ENCODE measurements at regions of chr4 and their contacts with region 1.

Region 1: GRCh38 chr4:153127760-153128494 is 76.3 kb upstream of the TRIM2 start:
- DNase-seq: peak; percentile 76 to 91 (median 87)
- ATAC-seq: peak; percentile 94
- H3K4me3 ChIP-seq: no peak overlapping the region
- H3K4me3 Mint-ChIP-seq: no peak overlapping the region
- H3K27ac ChIP-seq: no peak overlapping the region
- H3K27ac Mint-ChIP-seq: peak overlapping the region; percentile 46
- H3K4me1 ChIP-seq: peaks cover 3% of the 10 kb centered on the region
- H3K4me1 Mint-ChIP-seq: peaks cover 6% of the 10 kb centered on the region
- H3K27me3 ChIP-seq: no peaks in the 10 kb centered on the region
- H3K27me3 Mint-ChIP-seq: no peaks in the 10 kb centered on the region
- CTCF ChIP-seq: peak; percentile 92

Region 2: GRCh38 chr4:152436384-152436783 is 691.5 kb before region 1 on chr4:
- CTCF ChIA-PET with region 1: no interaction called
- POLR2A ChIA-PET with region 1: no interaction called
- intact Hi-C with region 1: no loop called
- DNase-seq: peak in 1 of 9 experiments; percentile 11
- ATAC-seq: no peak
- H3K4me3 ChIP-seq: no peak overlapping the region
- H3K4me3 Mint-ChIP-seq: no peak overlapping the region
- H3K27ac ChIP-seq: no peak overlapping the region
- H3K27ac Mint-ChIP-seq: no peak overlapping the region
- H3K4me1 ChIP-seq: no peaks in the 10 kb centered on the region
- H3K4me1 Mint-ChIP-seq: peaks cover 33% of the 10 kb centered on the region
- H3K27me3 ChIP-seq: no peaks in the 10 kb centered on the region
- H3K27me3 Mint-ChIP-seq: no peaks in the 10 kb centered on the region
- CTCF ChIP-seq: no peak

Region 3: DNA sequence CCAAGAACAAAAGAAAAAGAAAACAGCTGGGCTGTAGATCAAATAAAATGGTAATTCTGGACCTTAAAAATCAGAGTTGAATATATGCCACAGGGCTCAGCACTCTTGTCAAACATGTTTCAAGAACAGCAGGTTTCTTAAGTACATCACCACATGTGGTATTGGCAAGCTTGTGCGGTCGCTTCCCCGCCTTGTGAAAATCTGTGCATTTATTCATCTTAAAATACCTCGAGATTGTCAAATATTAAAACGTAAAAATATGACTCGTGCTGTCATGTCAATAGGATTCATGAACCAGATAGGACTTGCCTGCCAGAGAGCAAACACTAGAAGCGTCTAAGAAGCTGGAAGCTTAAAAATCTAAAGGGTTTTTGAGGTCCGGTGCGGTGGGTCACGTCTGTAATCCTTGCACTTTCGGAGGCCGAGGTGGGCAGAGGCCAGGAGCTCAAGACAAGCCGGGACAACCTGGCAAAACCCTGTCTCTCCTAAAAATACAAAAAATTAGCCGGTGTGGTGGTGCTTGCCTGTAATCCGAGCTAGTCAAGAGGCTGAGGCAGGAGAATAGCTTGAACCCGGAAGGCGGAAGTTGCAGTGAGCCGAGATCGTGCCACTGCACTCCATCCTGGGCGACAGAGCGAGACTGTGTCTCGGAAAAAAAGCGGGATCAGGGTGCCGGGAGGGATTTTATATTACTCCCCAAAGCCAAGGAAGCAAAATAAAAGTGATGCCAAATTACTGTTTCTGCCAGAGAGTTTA is 407.9 kb before region 1 on chr4:
- CTCF ChIA-PET with region 1: no interaction called
- POLR2A ChIA-PET with region 1: no interaction called
- intact Hi-C with region 1: no loop called
- DNase-seq: no peak
- ATAC-seq: no peak
- H3K4me3 ChIP-seq: no peak overlapping the region
- H3K4me3 Mint-ChIP-seq: no peak overlapping the region
- H3K27ac ChIP-seq: no peak overlapping the region
- H3K27ac Mint-ChIP-seq: no peak overlapping the region
- H3K4me1 ChIP-seq: no peaks in the 10 kb centered on the region
- H3K4me1 Mint-ChIP-seq: no peaks in the 10 kb centered on the region
- H3K27me3 ChIP-seq: no peaks in the 10 kb centered on the region
- H3K27me3 Mint-ChIP-seq: peaks cover 3% of the 10 kb centered on the region
- CTCF ChIP-seq: no peak

Region 4: GRCh38 chr4:153074936-153075630 is 52.8 kb before region 1 on chr4:
- CTCF ChIA-PET with region 1: interaction called, 467 read pairs
- POLR2A ChIA-PET with region 1: interaction called, 4 read pairs
- intact Hi-C with region 1: no loop called
- DNase-seq: no peak
- ATAC-seq: no peak
- H3K4me3 ChIP-seq: no peak overlapping the region
- H3K4me3 Mint-ChIP-seq: no peak overlapping the region
- H3K27ac ChIP-seq: no peak overlapping the region
- H3K27ac Mint-ChIP-seq: no peak overlapping the region
- H3K4me1 ChIP-seq: peaks cover 7% of the 10 kb centered on the region
- H3K4me1 Mint-ChIP-seq: peaks cover 8% of the 10 kb centered on the region
- H3K27me3 ChIP-seq: no peaks in the 10 kb centered on the region
- H3K27me3 Mint-ChIP-seq: no peaks in the 10 kb centered on the region
- CTCF ChIP-seq: no peak

Region 5: GRCh38 chr4:153089742-153090141 is 38.2 kb before region 1 on chr4:
- CTCF ChIA-PET with region 1: interaction called, 467 read pairs
- POLR2A ChIA-PET with region 1: interaction called, 5 read pairs
- intact Hi-C with region 1: no loop called
- DNase-seq: no peak
- ATAC-seq: no peak
- H3K4me3 ChIP-seq: no peak overlapping the region
- H3K4me3 Mint-ChIP-seq: no peak overlapping the region
- H3K27ac ChIP-seq: no peak overlapping the region
- H3K27ac Mint-ChIP-seq: no peak overlapping the region
- H3K4me1 ChIP-seq: peaks cover 13% of the 10 kb centered on the region
- H3K4me1 Mint-ChIP-seq: peaks cover 17% of the 10 kb centered on the region
- H3K27me3 ChIP-seq: no peaks in the 10 kb centered on the region
- H3K27me3 Mint-ChIP-seq: no peaks in the 10 kb centered on the region
- CTCF ChIP-seq: no peak

Region 6: GRCh38 chr4:153107246-153107645 is 20.7 kb before region 1 on chr4:
- CTCF ChIA-PET with region 1: interaction called, 113 read pairs
- POLR2A ChIA-PET with region 1: interaction called, 4 read pairs
- intact Hi-C with region 1: no loop called
- DNase-seq: no peak
- ATAC-seq: no peak
- H3K4me3 ChIP-seq: no peak overlapping the region
- H3K4me3 Mint-ChIP-seq: no peak overlapping the region
- H3K27ac ChIP-seq: no peak overlapping the region
- H3K27ac Mint-ChIP-seq: no peak overlapping the region
- H3K4me1 ChIP-seq: peaks cover 9% of the 10 kb centered on the region
- H3K4me1 Mint-ChIP-seq: peaks cover 11% of the 10 kb centered on the region
- H3K27me3 ChIP-seq: no peaks in the 10 kb centered on the region
- H3K27me3 Mint-ChIP-seq: no peaks in the 10 kb centered on the region
- CTCF ChIP-seq: no peak

Region 7: GRCh38 chr4:153142700-153143438 is 14.9 kb after region 1 on chr4:
- CTCF ChIA-PET with region 1: interaction called, 15 read pairs
- POLR2A ChIA-PET with region 1: no interaction called
- intact Hi-C with region 1: no loop called
- DNase-seq: peak in 8 of 9 experiments; percentile 19 to 70 (median 50)
- ATAC-seq: peak; percentile 68
- H3K4me3 ChIP-seq: no peak overlapping the region
- H3K4me3 Mint-ChIP-seq: no peak overlapping the region
- H3K27ac ChIP-seq: no peak overlapping the region
- H3K27ac Mint-ChIP-seq: no peak overlapping the region
- H3K4me1 ChIP-seq: no peaks in the 10 kb centered on the region
- H3K4me1 Mint-ChIP-seq: no peaks in the 10 kb centered on the region
- H3K27me3 ChIP-seq: no peaks in the 10 kb centered on the region
- H3K27me3 Mint-ChIP-seq: peaks cover 5% of the 10 kb centered on the region
- CTCF ChIP-seq: peak; percentile 62

Measured in CD8-positive, alpha-beta T cell (primary cell).